Heart left ventricle (tissue), 16 donors: ENCODE measurements at regions of chr7 and their contacts with region 1.

Region 1: DNA sequence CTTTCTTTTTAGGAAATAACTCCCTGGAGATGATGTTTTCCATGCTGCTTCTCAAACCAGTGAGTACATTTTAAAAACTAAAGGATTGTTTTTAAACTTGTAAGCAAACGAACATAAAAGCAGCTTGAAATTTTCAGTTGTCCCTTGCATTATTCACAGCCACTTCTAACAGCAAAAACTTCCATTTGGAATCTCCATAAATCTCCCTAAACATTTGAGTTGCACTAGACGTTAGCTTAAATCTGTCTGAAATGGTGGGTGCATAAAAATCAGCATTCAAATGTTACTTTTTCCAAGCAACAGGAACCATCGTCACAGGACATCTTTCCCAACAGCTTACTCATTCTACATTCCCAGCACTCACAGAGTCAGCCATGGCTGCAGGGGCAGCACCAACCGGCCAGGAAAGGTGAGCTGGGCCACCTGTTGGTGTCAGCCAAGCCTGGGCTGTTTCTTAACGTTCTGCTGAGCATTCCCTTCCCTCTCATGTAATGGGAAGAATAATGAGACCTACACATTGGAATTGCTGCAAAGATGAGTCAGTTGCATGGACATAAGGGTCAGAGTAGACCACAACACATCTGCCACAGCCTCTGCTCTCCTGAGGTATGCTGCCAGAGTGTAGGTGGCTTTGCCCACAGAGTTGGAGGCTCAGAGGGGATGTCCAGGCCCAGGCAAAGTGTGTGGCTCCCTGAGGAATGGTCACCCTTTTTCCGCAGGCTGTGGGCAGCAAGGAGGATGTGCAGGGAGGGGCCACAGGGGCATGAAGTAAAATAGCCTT is 163.1 kb downstream of the TNS3 start:
- DNase-seq: no peak
- ATAC-seq: no peak
- H3K4me3 ChIP-seq: no peak overlapping the region
- H3K27ac ChIP-seq: no peak overlapping the region
- H3K4me1 ChIP-seq: peaks cover 0 to 14% (median 3%) of the 10 kb centered on the region in 12 donors
- H3K27me3 ChIP-seq: no peaks in the 10 kb centered on the region
- CTCF ChIP-seq: no peak
- POLR2A ChIP-seq: no peak

Region 2: DNA sequence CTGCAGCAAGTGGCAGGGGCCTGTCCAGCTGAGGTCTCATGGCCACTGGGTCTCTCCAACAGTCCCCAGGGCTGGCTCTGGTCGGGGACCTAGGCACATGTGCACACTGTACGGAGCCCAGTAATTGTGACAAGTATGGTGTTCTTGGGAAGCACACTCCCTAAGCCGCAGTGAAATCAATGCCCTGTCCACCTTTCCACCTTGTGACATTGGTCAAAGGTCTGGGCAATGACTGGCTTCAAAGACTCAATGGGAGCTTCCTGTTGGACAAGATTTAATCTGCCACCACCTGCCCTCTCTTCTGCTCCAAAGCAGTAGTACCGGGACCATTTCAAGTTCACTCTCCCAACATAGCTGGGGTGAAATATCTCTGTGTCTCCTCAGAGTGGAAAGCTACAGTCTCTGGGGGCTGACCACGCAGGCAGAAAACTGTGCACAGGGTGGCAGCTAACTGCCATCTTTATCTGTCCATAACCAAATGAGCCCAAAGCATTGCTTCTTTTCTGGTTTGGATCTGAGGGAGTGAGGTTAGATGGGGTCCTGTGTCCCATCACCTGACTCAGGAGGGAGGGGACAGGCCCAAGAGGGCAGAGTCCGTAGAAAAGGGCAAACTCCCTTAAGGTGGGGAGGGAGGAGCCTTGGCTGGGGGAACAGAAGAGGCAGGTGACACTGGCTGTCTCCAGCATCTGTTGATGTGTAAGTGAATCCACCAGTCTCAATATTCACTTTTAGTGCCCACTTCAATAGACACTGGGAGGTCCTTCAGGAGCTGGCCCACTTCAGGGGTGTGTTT is 144.6 kb before region 1 on chr7:
- intact Hi-C with region 1: loop called in 1 of 10 experiments (anchors 5 kb)
- DNase-seq: no peak
- ATAC-seq: no peak
- H3K4me3 ChIP-seq: no peak overlapping the region
- H3K27ac ChIP-seq: no peak overlapping the region
- H3K4me1 ChIP-seq: peaks cover 0 to 5% (median 0%) of the 10 kb centered on the region in 12 donors
- H3K27me3 ChIP-seq: no peaks in the 10 kb centered on the region
- CTCF ChIP-seq: no peak
- POLR2A ChIP-seq: no peak

Region 3: DNA sequence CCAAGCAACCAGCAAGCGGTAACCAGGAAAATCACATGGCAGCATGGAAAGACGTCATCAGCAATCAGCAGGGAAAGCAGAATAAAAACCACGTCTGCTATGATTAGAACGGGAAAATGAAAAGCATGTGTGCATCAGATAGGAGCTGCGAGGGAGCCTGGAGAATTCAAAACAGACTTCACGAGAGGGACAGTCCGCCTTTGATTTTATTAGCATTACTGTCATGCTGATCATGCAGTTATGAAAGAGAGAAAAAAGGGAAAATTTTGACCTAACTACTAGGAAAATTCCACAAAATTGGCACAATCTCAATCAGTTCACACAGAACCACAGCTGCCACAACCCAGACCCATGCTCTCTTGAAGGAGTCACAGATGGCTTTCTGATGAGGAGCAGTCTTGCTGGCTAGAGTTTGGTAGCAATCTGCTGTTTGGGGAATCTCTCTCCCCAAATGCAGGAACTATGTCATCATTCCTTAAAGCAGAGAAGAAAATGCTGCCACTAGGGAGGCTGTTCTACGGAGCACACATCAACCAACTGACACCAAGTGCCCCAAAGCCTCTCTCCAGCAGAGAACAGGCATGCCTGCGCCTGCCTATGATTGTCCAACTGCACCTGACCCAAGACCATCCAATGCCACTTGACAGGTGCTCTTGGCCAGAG is 132.8 kb before region 1 on chr7:
- intact Hi-C with region 1: loop called in 1 of 10 experiments (anchors 5 kb)
- DNase-seq: no peak
- ATAC-seq: peak; percentile 27 to 72 (median 52)
- H3K4me3 ChIP-seq: no peak overlapping the region
- H3K27ac ChIP-seq: peak overlapping the region in 10 of 12 donors; percentile 6 to 57 (median 46)
- H3K4me1 ChIP-seq: peaks cover 0 to 26% (median 11%) of the 10 kb centered on the region in 12 donors
- H3K27me3 ChIP-seq: no peaks in the 10 kb centered on the region
- CTCF ChIP-seq: peak in 5 of 12 donors; percentile 15 to 39 (median 25)
- POLR2A ChIP-seq: no peak

Region 4: DNA sequence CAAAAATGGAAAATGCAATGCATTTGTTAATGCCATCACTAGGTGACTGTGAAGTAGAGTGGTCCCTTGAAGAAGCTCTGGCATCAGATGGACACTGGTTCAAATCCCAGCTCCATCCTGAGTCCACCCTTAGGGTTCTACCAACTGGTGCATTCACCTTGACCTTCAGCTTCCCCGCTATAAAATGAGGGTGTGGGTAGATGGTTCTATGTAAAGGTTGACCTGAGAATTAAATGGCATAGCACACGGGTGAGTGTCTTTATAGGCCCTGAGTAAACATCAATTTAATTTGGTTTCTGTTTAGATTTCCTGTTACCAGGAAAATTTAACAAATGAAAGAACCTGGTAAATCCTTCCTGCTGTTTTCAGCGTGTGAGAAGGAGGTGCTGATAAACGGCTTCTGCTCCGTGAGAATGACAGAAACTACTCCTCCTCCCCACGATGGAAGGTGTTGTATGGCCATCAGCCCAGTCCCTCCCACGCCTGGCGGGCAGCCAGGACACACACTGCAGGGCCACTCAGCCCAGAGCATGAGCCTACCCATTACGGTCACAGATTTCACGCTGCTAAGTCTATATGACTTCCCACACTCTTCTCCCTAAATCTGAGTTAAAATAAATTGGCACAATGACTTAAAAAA is 46.9 kb before region 1 on chr7:
- intact Hi-C with region 1: no loop called
- DNase-seq: peak; percentile 83 to 91 (median 85)
- ATAC-seq: peak; percentile 80 to 89 (median 88)
- H3K4me3 ChIP-seq: no peak overlapping the region
- H3K27ac ChIP-seq: peak overlapping the region in 6 of 12 donors; percentile 21 to 51 (median 33)
- H3K4me1 ChIP-seq: peaks cover 0 to 62% (median 35%) of the 10 kb centered on the region in 12 donors
- H3K27me3 ChIP-seq: no peaks in the 10 kb centered on the region
- CTCF ChIP-seq: no peak
- POLR2A ChIP-seq: no peak